ENCODE measurements at regions of chr1 and their contacts with region 1.

Region 1: DNA sequence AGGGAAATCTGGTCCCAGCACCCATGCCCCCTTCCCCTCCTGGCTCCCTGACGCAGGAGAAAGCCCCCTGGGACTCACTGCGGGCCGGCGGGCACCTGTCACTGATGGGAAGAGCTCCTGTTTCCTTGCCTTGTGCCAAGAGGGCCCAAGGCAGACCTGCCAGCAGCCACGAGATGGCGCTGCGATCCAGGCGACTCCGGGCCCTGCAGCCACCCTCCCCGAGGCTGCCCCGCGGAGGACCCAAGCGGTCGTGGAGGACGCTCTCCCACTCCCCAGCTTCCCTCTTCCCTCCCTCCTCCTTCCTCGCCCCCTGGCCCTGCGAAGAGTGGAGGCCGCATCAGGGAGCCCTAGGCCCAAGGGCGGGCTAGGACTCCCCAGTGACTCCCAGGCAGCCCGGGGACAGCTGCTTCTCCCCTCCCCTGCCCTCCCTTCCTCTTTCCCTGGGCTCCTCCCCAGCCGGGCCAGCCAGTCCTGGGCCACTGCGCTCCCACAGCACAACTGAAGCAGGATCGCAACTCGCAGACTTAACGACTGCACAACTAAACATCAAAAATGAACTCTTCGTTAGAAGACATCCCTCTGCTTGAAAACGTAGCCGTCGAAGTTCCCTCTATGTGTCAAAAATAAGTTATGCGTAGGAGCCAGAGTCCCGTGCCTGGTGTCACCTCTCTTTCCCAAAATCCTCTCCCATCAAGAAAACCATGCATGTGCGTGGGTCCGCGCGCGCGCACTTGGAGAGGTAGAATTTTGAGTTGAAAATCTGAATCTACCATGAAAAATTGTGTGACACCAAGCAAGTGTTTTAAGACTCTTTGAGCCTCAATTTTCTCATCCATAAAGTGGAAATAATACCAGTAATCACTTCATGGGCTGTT is 34.2 kb downstream of the BATF3 start:
- DNase-seq: peak; percentile 88
- CTCF ChIP-seq: peak; percentile 99

Region 2: DNA sequence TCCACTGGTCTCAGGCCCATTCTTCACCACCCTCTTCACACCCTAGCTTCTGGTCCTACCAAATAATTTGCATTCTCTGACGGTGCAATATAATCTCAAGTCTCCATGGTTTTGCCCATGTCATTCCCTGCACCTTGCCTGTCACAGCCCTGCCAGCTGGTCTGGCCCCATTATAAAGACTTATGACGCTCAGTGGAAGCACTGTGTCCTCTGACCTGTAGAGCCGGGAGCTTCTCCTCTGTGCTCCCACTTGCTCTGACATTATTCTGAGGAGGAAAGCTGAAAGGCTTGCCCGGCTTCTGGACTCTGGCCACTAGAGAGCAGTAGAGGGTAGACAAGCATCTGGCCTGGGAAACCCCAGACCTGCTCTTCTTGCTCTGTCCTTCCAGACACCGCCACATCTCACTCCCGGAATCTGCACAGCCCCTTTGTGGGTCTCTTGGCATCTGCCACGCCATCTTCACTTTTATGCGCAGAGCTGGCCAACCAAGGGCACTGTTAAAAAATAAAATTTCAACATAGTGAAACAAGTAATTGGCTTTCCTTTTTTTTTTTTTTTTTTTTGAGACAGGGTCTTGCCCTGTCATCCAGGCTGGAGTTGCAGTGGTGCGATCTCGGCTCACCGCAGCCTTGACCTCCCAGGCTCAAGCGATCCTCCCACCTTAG is 188.3 kb before region 1 on chr1:
- CTCF ChIA-PET with region 1: interaction called, 17 read pairs
- POLR2A ChIA-PET with region 1: interaction called, 4 read pairs
- DNase-seq: peak; percentile 87
- CTCF ChIP-seq: peak; percentile 90

Region 3: DNA sequence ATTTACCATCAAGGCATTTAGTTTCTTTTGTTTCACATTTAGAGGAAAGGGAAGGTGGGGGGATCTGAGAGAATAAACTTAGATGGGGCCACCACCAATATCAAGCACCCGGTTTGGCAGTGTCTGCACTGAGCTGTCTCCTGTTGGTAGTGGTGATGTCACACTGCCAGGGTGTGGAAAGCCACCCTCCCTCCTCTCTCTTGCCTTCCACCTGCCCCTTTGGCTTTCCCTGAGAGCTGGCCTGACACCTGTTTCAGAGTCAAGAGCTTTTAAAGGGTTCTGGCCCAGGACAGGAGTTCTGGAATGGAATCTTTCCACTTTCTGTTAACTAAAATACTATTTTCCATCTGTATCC is 43.5 kb before region 1 on chr1:
- CTCF ChIA-PET with region 1: interaction called, 21 read pairs
- POLR2A ChIA-PET with region 1: no interaction called
- DNase-seq: no peak
- CTCF ChIP-seq: no peak

Region 4: GRCh38 chr1:212683357-212683722 is 17.9 kb after region 1 on chr1:
- CTCF ChIA-PET with region 1: interaction called, 52 read pairs
- POLR2A ChIA-PET with region 1: no interaction called
- DNase-seq: peak; percentile 82
- CTCF ChIP-seq: no peak

Region 5: GRCh38 chr1:212774584-212774983 is 109.1 kb after region 1 on chr1:
- CTCF ChIA-PET with region 1: interaction called, 28 read pairs
- POLR2A ChIA-PET with region 1: no interaction called
- DNase-seq: no peak
- CTCF ChIP-seq: no peak

Region 6: GRCh38 chr1:212994926-212995325 is 329.4 kb after region 1 on chr1:
- CTCF ChIA-PET with region 1: interaction called, 20 read pairs
- POLR2A ChIA-PET with region 1: no interaction called
- DNase-seq: no peak
- CTCF ChIP-seq: no peak

Measured in GM10248 (cell line).